Panc1 (cell line): ENCODE measurements at regions of chr18 and their contacts with region 1.

Region 1: DNA sequence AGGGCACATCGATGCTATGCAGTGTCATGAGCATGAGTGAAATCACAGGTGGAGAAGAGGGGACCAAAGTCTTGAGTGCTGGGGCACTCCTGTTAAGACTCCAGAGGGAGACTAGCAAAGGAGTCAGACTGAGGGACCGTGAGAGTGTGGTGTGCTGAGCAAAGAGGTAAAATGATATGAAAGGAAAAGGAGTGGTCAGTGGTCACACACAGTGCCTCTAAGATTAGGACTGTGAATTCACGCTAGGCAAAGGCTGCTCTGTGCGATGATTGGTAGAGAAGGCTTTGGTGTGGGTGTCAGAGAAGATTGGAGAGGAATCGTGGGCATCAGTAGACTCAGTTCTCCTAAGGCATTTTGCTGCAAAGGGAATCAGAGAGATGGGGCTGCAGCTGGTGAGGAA is 12.8 kb downstream of the SOCS6 start:
- DNase-seq: no peak
- ATAC-seq: 0 out of 2 replicates have a peak, but pooled peaks have one; percentile 43
- H3K4me3 ChIP-seq: no peak overlapping the region
- H3K27ac ChIP-seq: peak overlapping the region; percentile 86
- H3K4me1 ChIP-seq: peaks cover 72% of the 10 kb centered on the region
- H3K27me3 ChIP-seq: no peaks in the 10 kb centered on the region
- CTCF ChIP-seq: no peak

Region 2: DNA sequence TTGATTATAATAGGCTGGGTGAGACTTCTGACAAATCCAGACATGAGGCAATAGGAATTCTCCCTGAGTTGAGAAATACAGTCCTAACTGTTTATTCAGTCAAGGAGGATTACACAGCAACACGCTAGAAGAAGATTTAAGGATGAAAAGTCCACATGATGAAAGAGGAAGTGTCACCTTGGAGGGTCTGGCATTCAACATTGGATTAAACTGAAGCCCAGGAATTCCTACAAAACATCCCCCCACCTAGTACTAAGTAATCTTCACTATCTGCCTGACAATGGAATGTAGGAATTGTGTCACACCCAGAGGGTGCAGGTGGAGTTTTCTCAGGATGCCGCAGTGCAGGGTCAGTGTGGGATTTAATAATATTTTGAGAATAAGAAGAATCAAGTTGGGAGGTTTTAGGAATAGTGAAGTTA is 129.5 kb after region 1 on chr18:
- CTCF ChIA-PET with region 1: interaction called, 5 read pairs
- POLR2A ChIA-PET with region 1: no interaction called
- in situ Hi-C with region 1: no loop called
- intact Hi-C with region 1: loop called (anchors 5 kb)
- DNase-seq: no peak
- ATAC-seq: no peak
- H3K4me3 ChIP-seq: no peak overlapping the region
- H3K27ac ChIP-seq: peak overlapping the region; percentile 69
- H3K4me1 ChIP-seq: no peaks in the 10 kb centered on the region; the same call in 1 of the 2 replicates
- H3K27me3 ChIP-seq: no peaks in the 10 kb centered on the region
- CTCF ChIP-seq: no peak